Prostate gland (tissue), 2 donors: ENCODE measurements at regions of chr12 and their contacts with region 1.

Region 1: GRCh38 chr12:31959161-31959700 is at the start of gene RESF1:
- DNase-seq: peak; percentile 87
- H3K4me3 ChIP-seq: peak within 1 kb of the TSS; percentile 70 to 76
- H3K27ac ChIP-seq: peak within 1 kb of the TSS; percentile 91
- H3K4me1 ChIP-seq: no peaks in the 10 kb centered on the region
- H3K27me3 ChIP-seq: no peaks in the 10 kb centered on the region
- CTCF ChIP-seq: no peak
- POLR2A ChIP-seq: peak; percentile 85
- total RNA-seq, gene RESF1: 27.6 to 97.7 TPM

Region 2: DNA sequence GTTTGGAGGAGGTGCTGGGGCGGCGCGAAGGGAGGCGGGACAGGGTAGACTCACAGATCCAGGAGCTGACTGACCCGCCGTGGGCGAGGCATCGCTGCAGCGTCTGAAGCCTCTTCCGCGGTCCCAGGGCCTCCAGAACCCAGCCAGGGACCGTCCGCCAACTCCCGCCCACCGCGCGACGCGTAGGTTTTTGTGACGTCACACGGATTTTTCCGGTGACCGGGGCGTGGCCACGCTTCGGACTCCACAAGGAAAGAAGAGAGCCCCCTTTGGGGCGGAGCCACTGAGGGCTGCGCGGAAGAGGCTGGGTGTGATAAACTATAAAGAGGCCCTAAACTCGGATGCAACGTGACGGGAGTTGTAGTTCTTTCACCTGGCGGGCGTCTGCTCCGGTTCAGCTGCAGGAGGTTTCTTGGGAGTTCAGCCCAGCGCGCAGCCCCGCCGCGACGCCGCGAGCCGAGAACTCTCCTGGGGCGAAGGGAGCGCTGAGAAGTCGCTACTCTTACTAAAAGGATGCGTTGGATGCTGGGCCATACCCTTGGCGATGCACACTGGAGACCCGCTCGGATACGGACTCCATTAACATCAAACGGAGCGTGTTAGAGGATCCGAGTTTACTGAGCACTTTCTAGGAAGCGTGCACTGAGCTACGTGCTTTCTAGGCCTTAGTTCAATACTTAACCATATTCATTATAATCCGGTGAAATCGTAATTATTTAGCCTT is 230.2 kb before region 1 on chr12 and contains the start of gene AMN1:
- intact Hi-C with region 1: loop called (anchors 2 kb)
- DNase-seq: peak; percentile 99
- H3K4me3 ChIP-seq: peak within 1 kb of the TSS; percentile 51 to 61
- H3K27ac ChIP-seq: peak within 1 kb of the TSS; percentile 92 to 96
- H3K4me1 ChIP-seq: no peaks in the 10 kb centered on the region
- H3K27me3 ChIP-seq: no peaks in the 10 kb centered on the region
- CTCF ChIP-seq: peak in 2 of 4 experiments; percentile 35 to 47
- POLR2A ChIP-seq: peak; percentile 82
- total RNA-seq, gene AMN1: 11.9 to 31.9 TPM

Region 3: GRCh38 chr12:32002848-32003493 is 43.7 kb after region 1 on chr12:
- intact Hi-C with region 1: no loop called
- DNase-seq: no peak
- H3K4me3 ChIP-seq: no peak overlapping the region
- H3K27ac ChIP-seq: no peak overlapping the region
- H3K4me1 ChIP-seq: no peaks in the 10 kb centered on the region
- H3K27me3 ChIP-seq: no peaks in the 10 kb centered on the region
- CTCF ChIP-seq: no peak
- POLR2A ChIP-seq: no peak

Region 4: GRCh38 chr12:32025906-32026305 is 66.7 kb after region 1 on chr12:
- intact Hi-C with region 1: no loop called
- DNase-seq: no peak
- H3K4me3 ChIP-seq: no peak overlapping the region
- H3K27ac ChIP-seq: no peak overlapping the region
- H3K4me1 ChIP-seq: no peaks in the 10 kb centered on the region
- H3K27me3 ChIP-seq: no peaks in the 10 kb centered on the region
- CTCF ChIP-seq: no peak
- POLR2A ChIP-seq: no peak

Region 5: GRCh38 chr12:32083489-32083888 is 124.3 kb after region 1 on chr12:
- intact Hi-C with region 1: no loop called
- DNase-seq: no peak
- H3K4me3 ChIP-seq: no peak overlapping the region
- H3K27ac ChIP-seq: no peak overlapping the region
- H3K4me1 ChIP-seq: no peaks in the 10 kb centered on the region
- H3K27me3 ChIP-seq: no peaks in the 10 kb centered on the region
- CTCF ChIP-seq: no peak
- POLR2A ChIP-seq: no peak

Region 6: DNA sequence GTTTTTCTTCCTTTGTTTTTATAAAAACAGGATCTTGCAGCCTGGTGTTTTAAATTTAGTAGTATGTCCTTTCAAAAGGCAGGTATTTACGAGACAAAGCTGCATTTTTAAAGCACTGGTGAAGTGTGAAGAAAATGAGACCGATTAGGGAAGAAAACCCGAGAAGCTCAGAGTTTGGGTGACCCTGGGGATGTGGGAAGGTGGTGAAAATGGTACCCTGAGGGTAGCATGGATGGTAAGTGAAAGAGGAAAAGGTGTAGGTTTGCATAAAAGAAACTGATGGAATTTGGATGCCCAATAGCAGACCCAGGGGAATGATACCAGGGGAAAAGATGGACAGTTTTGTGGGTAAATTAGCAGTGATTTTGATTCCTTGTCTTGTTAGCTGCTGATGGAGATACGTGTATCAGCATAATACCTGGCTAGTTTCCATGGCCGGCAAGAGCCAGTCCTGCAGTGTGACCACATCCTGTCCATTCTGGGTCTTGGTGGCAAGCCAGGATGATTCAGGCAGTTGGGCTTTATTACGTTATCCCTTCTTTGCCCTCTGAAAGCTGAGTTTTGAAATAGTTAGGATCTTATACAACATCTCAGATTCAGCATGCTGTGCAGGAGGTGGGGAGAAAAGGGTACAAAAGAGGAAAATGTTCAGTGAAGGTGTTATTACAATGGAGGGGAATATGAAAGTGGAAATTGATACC is 156.3 kb after region 1 on chr12:
- intact Hi-C with region 1: loop called (anchors 10 kb)
- DNase-seq: peak; percentile 70
- H3K4me3 ChIP-seq: no peak overlapping the region
- H3K27ac ChIP-seq: no peak overlapping the region
- H3K4me1 ChIP-seq: no peaks in the 10 kb centered on the region
- H3K27me3 ChIP-seq: no peaks in the 10 kb centered on the region
- CTCF ChIP-seq: no peak
- POLR2A ChIP-seq: no peak